ENCODE measurements at regions of chr4 and their contacts with region 1.

Region 1: DNA sequence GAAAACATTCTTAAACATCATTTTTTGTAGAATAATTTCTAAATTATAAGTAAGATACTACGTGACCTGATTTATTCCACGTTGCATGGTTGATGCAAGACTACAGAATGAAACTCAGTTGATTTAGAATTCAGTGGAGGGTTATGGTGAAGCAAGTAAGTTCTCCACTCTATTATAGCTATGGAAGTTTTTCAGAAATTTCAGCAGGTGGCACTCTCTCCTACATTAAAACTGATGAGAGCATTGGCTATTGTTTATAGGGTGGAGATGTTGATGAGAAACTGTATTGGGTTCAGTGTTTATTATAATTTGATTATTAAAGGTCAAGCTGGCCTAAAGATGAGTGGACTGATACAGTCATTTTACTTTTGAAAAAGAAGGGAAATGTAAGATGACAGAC is 88.0 kb downstream of the FNIP2 start:
- DNase-seq: peak in 1 of 5 donors; percentile 32
- H3K4me3 ChIP-seq: no peak overlapping the region
- H3K4me3 Mint-ChIP-seq: no peak overlapping the region
- H3K27ac ChIP-seq: no peak overlapping the region
- H3K27ac Mint-ChIP-seq: no peak overlapping the region
- H3K4me1 ChIP-seq: no peaks in the 10 kb centered on the region
- H3K4me1 Mint-ChIP-seq: no peaks in the 10 kb centered on the region
- H3K27me3 ChIP-seq: no peaks in the 10 kb centered on the region
- H3K27me3 Mint-ChIP-seq: no peaks in the 10 kb centered on the region

Region 2: DNA sequence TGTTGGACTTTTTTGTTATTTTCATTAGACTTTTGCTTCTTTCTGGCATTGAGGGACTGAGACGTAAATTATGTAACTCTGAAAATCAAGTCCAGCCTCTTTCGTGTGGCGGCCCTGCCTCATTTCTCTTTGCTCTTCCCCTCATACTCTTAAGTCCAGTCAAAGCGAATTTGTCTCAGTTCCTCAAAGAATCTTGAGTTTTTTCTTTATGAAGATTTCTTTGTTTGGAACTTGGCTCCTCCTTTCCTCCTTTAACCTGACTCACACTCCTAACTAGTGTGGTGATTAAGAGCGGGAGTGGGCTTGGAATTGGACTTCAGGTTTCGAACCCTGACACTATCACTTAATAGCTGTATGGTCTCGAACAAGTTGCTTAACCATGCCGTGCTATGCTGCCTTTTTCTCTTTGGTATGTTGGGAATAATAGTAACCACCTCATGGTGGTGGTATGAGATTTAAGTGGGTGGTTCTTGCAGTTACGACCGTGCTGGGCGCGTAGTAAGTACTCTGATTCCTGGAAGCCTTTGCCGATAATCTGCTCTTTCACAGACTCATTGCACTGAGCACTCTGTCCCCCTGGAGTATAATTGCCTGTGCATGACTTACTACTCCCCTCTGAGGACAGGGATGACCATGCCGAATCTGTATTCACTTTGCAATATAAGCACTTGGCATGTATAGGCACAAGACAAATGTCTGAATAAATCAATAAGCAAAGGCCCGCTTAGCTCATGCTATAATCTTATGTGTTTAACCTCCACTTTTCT is 69.0 kb before region 1 on chr4:
- CTCF ChIA-PET with region 1: no interaction called
- POLR2A ChIA-PET with region 1: no interaction called
- DNase-seq: no peak
- H3K4me3 ChIP-seq: no peak overlapping the region
- H3K4me3 Mint-ChIP-seq: no peak overlapping the region
- H3K27ac ChIP-seq: no peak overlapping the region
- H3K27ac Mint-ChIP-seq: no peak overlapping the region
- H3K4me1 ChIP-seq: peaks cover 1% of the 10 kb centered on the region
- H3K4me1 Mint-ChIP-seq: peaks cover 3 to 20% (median 4%) of the 10 kb centered on the region in 3 donors
- H3K27me3 ChIP-seq: no peaks in the 10 kb centered on the region
- H3K27me3 Mint-ChIP-seq: peaks cover 6 to 7% of the 10 kb centered on the region in 2 donors

Region 3: GRCh38 chr4:158833553-158833952 is 23.3 kb before region 1 on chr4:
- CTCF ChIA-PET with region 1: no interaction called
- POLR2A ChIA-PET with region 1: no interaction called
- DNase-seq: no peak
- H3K4me3 ChIP-seq: no peak overlapping the region
- H3K4me3 Mint-ChIP-seq: no peak overlapping the region
- H3K27ac ChIP-seq: no peak overlapping the region
- H3K27ac Mint-ChIP-seq: no peak overlapping the region
- H3K4me1 ChIP-seq: no peaks in the 10 kb centered on the region
- H3K4me1 Mint-ChIP-seq: no peaks in the 10 kb centered on the region
- H3K27me3 ChIP-seq: no peaks in the 10 kb centered on the region
- H3K27me3 Mint-ChIP-seq: peaks cover 0 to 1% of the 10 kb centered on the region in 2 donors

Region 4: DNA sequence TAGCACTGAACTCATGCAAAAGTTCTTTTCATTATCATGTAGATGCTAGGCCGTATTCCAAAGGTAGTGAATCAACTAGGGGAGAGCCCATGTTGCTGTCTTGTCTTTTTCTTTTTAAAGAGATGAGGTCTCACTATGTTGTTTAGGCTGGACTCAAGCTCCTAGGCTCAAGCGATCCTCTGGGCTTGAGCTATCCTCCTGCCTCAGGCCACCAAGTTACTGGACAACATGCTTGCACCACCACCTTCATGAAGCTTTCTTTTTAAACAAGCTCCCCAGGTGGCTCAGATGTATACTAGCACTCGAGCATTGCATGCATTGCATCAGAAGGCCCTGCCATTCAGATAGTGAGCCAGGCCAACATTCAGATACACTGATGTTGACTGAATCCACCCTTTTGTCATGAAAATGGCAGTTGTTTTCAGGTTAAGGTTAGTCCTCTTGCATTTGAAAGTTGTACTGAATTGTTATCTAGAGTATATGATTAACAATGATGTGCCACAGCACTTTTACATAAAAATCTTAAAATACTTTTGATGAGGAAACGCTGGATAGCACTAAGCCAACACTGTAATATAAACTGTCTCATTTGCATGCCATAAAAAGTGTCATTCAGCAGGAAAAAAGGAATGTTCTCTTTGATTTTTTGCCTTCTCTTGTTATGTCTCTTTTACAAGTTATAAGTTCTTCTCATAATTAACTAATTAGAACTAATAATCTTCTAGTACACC is 11.4 kb before region 1 on chr4:
- CTCF ChIA-PET with region 1: interaction called, 10 read pairs
- POLR2A ChIA-PET with region 1: no interaction called
- DNase-seq: no peak
- H3K4me3 ChIP-seq: no peak overlapping the region
- H3K4me3 Mint-ChIP-seq: no peak overlapping the region
- H3K27ac ChIP-seq: no peak overlapping the region
- H3K27ac Mint-ChIP-seq: peak overlapping the region in 1 of 8 donors; percentile 32
- H3K4me1 ChIP-seq: no peaks in the 10 kb centered on the region
- H3K4me1 Mint-ChIP-seq: peaks cover 3 to 5% (median 4%) of the 10 kb centered on the region in 3 donors
- H3K27me3 ChIP-seq: no peaks in the 10 kb centered on the region
- H3K27me3 Mint-ChIP-seq: no peaks in the 10 kb centered on the region

Region 5: GRCh38 chr4:159206427-159206871 is 349.6 kb after region 1 on chr4:
- CTCF ChIA-PET with region 1: interaction called, 19 read pairs
- POLR2A ChIA-PET with region 1: no interaction called
- DNase-seq: no peak
- H3K4me3 ChIP-seq: no peak overlapping the region
- H3K4me3 Mint-ChIP-seq: peak overlapping the region in 1 of 7 donors; percentile 60
- H3K27ac ChIP-seq: no peak overlapping the region
- H3K27ac Mint-ChIP-seq: peak overlapping the region in 3 of 8 donors; percentile 29 to 58 (median 51)
- H3K4me1 ChIP-seq: no peaks in the 10 kb centered on the region
- H3K4me1 Mint-ChIP-seq: peaks cover 22 to 42% (median 33%) of the 10 kb centered on the region in 3 donors
- H3K27me3 ChIP-seq: no peaks in the 10 kb centered on the region
- H3K27me3 Mint-ChIP-seq: peaks cover 0 to 1% of the 10 kb centered on the region in 2 donors